HCT116 (cell line): ENCODE measurements at regions of chr5 and their contacts with region 1.

Region 1: DNA sequence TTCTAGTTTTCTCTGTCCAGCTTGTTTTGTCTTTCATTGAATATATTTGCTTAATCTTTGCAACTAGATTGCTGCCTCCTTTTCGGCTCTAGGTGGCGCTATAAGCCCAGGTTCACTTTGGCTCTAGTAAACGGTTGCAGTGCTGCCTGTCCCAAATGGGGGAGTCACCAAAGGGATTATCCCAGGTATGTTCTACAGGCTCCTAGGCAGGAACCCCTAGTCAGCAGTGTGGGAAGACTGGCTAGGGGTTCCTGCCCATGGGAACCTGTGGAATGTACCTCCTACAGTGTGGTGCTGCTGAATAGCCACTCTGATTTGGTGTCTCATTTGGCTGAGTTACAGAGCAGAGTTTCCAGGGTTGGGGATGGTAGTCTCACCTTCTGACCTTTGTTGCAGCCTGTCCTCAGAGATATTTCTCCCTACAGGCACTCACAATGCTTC is 85.2 kb downstream of the ARSB start:
- DNase-seq: peak; percentile 44
- ATAC-seq: peak; percentile 86
- H3K4me3 ChIP-seq: no peak overlapping the region
- H3K27ac ChIP-seq: no peak overlapping the region
- H3K4me1 ChIP-seq: no peaks in the 10 kb centered on the region
- H3K27me3 ChIP-seq: no peaks in the 10 kb centered on the region
- CTCF ChIP-seq: peak; percentile 76 to 96 (median 91)
- POLR2A ChIP-seq: no peak
- RAD21 ChIP-seq: peak; percentile 91

Region 2: DNA sequence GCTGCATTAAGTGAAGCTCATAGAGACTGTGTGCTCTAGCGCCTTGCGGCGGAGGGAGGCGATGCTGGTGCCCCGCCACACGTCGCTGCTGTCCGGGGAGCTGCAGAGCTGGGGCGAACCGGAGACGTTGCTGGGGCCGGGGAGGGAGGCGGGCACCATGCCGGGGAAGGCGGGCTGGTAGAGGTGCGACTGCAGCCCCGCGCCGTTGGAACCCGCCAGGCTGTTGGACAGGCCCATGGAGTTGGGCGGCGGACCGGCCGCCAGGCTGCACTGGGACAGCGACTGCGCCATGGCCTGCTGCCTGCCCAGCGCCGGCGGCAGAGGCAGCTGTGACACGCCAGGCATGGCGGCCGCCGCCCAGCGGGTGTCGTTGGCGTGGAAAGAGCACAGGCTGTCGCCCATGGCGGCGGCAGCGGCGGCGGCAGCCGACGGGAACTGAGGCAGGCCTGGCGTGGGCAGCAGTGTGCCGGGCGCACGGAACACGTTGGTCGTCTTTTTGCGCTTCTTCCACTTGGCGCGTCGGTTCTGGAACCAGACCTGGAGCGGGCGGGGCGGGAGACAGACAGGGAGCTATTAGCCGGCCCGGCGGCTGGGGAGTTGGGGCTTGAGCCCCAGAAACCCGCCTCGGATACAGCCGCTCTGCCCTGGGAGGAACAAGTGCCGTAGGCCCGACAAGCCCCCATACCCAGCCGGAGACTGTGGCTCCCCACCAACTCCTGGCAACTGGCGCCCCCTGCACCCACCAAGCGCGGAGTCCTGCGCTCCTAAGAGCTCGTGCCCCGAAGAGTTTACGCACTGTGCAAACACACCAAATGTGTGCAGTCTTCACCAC is 1269.5 kb before region 1 on chr5:
- CTCF ChIA-PET with region 1: no interaction called
- POLR2A ChIA-PET with region 1: no interaction called
- RAD21 ChIA-PET with region 1: no interaction called
- intact Hi-C with region 1: no loop called
- DNase-seq: peak; percentile 61
- ATAC-seq: peak; percentile 97
- H3K4me3 ChIP-seq: peak overlapping the region; percentile 51 to 69
- H3K27ac ChIP-seq: peak overlapping the region; percentile 81
- H3K4me1 ChIP-seq: peaks cover 4 to 14% of the 10 kb centered on the region in 2 experiments; a peak in 2 of 4 replicates
- H3K27me3 ChIP-seq: no peaks in the 10 kb centered on the region
- CTCF ChIP-seq: peak in 2 of 3 experiments; percentile 4 to 37; a peak in 3 of 6 replicates
- POLR2A ChIP-seq: peak; percentile 72
- RAD21 ChIP-seq: no peak; the same call in 1 of the 2 replicates

Region 3: GRCh38 chr5:78326930-78327329 is 573.0 kb before region 1 on chr5:
- CTCF ChIA-PET with region 1: no interaction called
- POLR2A ChIA-PET with region 1: no interaction called
- RAD21 ChIA-PET with region 1: no interaction called
- intact Hi-C with region 1: no loop called
- DNase-seq: no peak
- ATAC-seq: no peak
- H3K4me3 ChIP-seq: no peak overlapping the region
- H3K27ac ChIP-seq: no peak overlapping the region
- H3K4me1 ChIP-seq: no peaks in the 10 kb centered on the region
- H3K27me3 ChIP-seq: no peaks in the 10 kb centered on the region
- CTCF ChIP-seq: no peak
- POLR2A ChIP-seq: no peak
- RAD21 ChIP-seq: no peak

Region 4: GRCh38 chr5:78504704-78505677 is 395.0 kb before region 1 on chr5:
- CTCF ChIA-PET with region 1: no interaction called
- POLR2A ChIA-PET with region 1: no interaction called
- RAD21 ChIA-PET with region 1: no interaction called
- intact Hi-C with region 1: no loop called
- DNase-seq: peak; percentile 38
- ATAC-seq: peak; percentile 84
- H3K4me3 ChIP-seq: no peak overlapping the region
- H3K27ac ChIP-seq: peak overlapping the region; percentile 9; the same call in 1 of the 2 replicates
- H3K4me1 ChIP-seq: peaks cover 14 to 24% of the 10 kb centered on the region in 2 experiments; a peak in 3 of 4 replicates
- H3K27me3 ChIP-seq: no peaks in the 10 kb centered on the region
- CTCF ChIP-seq: no peak
- POLR2A ChIP-seq: no peak
- RAD21 ChIP-seq: no peak; the same call in 1 of the 2 replicates

Region 5: DNA sequence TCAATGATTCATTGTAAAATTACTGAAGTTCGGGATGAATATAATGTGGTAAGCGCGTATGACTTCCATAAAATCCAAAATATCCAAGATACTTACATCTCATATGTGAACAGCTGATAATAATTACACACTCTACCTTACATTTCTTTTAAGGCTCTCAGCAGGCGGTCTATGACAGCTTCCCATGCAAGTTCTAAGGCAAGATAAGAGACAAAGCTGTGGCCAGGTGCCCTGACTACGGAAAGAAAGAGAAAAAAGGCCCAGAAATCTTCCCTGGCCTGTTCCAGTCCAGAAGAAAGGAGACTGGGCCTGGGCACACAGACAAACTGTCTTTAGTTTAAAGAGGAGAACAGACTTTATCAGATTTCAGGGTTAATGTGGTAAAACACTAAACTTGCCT is 16.1 kb after region 1 on chr5:
- CTCF ChIA-PET with region 1: interaction called, 16 read pairs
- POLR2A ChIA-PET with region 1: no interaction called
- RAD21 ChIA-PET with region 1: no interaction called
- intact Hi-C with region 1: no loop called
- DNase-seq: no peak
- ATAC-seq: no peak
- H3K4me3 ChIP-seq: no peak overlapping the region
- H3K27ac ChIP-seq: no peak overlapping the region
- H3K4me1 ChIP-seq: no peaks in the 10 kb centered on the region
- H3K27me3 ChIP-seq: no peaks in the 10 kb centered on the region
- CTCF ChIP-seq: no peak
- POLR2A ChIP-seq: no peak
- RAD21 ChIP-seq: no peak

Region 6: DNA sequence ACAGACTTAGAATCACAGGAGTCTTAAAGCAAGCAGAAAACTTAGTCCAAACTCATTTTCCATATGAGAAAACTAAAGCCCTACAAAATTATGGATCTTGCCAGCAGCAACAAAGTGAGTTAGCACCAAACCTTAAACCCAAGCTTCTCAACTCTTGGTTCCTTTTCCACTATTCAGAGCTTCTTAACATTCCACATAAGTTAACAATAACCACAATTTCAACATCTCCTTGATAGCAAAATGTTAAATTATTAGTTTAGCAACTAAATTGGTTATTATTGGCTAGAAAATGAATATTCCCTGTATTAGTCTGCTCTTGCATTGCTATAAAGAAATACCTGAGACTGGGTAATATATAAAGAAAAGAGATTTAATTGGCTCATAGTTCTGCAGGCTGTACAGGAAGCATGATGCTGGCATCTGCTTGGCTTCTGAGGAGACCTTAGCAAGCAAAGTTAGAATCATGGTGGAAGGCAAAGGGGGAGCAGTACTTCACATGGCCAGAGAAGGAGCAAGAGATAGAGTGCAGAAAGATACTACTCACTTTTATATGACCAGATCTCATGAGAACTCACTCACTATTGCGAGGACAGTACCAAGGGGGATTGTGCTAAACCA is 111.4 kb after region 1 on chr5:
- CTCF ChIA-PET with region 1: interaction called, 4 read pairs
- POLR2A ChIA-PET with region 1: no interaction called
- RAD21 ChIA-PET with region 1: no interaction called
- intact Hi-C with region 1: loop called (anchors 5 kb)
- DNase-seq: no peak
- ATAC-seq: peak; percentile 57
- H3K4me3 ChIP-seq: no peak overlapping the region
- H3K27ac ChIP-seq: no peak overlapping the region
- H3K4me1 ChIP-seq: no peaks in the 10 kb centered on the region
- H3K27me3 ChIP-seq: no peaks in the 10 kb centered on the region
- CTCF ChIP-seq: 0 out of 6 replicates have a peak, but pooled peaks of 2 of the 3 experiments have one; percentile 9 to 11
- POLR2A ChIP-seq: no peak
- RAD21 ChIP-seq: no peak

Region 7: DNA sequence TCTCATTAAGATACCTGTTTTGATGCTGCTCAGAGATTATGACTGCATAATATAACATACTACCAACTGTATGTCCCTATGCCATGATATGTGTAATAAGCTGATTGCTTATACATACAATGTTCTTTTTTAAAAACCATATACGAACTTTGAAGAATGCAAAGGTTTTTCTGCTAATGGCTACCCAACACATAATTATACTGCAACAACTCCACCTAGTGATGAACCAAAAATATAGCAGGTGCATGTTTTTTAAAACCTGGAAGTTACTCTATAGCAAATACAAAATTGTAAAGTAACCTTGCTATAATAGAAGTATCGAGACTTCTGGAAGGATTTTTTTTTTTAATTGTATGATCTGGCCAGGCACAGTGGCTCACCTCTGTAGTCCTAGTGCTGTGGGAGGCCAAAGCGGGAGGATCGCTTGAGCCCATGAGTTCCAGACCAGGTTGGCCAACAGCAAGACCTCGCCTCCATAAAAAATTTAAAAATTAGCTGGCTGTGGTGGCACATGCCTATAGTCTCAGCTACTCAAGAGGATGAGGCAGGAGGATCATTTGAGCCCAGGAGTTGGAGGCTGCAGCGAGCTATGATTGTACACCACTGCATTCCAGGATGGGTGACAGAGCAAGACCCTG is 564.9 kb after region 1 on chr5:
- CTCF ChIA-PET with region 1: interaction called, 3 read pairs
- POLR2A ChIA-PET with region 1: no interaction called
- RAD21 ChIA-PET with region 1: no interaction called
- intact Hi-C with region 1: loop called (anchors 10 kb)
- DNase-seq: peak; percentile 10
- ATAC-seq: peak; percentile 71
- H3K4me3 ChIP-seq: no peak overlapping the region
- H3K27ac ChIP-seq: no peak overlapping the region
- H3K4me1 ChIP-seq: no peaks in the 10 kb centered on the region
- H3K27me3 ChIP-seq: no peaks in the 10 kb centered on the region
- CTCF ChIP-seq: peak; percentile 44 to 81 (median 78); a peak in 5 of 6 replicates
- POLR2A ChIP-seq: no peak
- RAD21 ChIP-seq: peak; percentile 84